Astrocyte of the cerebellum (primary cell): ENCODE measurements at regions of chr2 and their contacts with region 1.

Region 1: GRCh38 chr2:109242654-109243331 is 113.8 kb downstream of the SH3RF3 start:
- DNase-seq: peak; percentile 75
- H3K4me3 ChIP-seq: no peak overlapping the region
- CTCF ChIP-seq: no peak

Region 2: GRCh38 chr2:109135359-109136197 is 107.2 kb before region 1 on chr2:
- in situ Hi-C with region 1: loop called (anchors 5 kb)
- DNase-seq: peak; percentile 82
- H3K4me3 ChIP-seq: no peak overlapping the region
- CTCF ChIP-seq: no peak

Region 3: GRCh38 chr2:109284826-109285225 is 42.0 kb after region 1 on chr2:
- in situ Hi-C with region 1: loop called (anchors 5 kb)
- DNase-seq: peak; percentile 32
- H3K4me3 ChIP-seq: no peak overlapping the region
- CTCF ChIP-seq: no peak

Region 4: GRCh38 chr2:109304731-109305470 is 62.1 kb after region 1 on chr2:
- in situ Hi-C with region 1: no loop called
- DNase-seq: no peak
- H3K4me3 ChIP-seq: no peak overlapping the region
- CTCF ChIP-seq: no peak

Region 5: GRCh38 chr2:109348671-109349550 is 106.1 kb after region 1 on chr2:
- in situ Hi-C with region 1: loop called (anchors 5 kb)
- DNase-seq: no peak
- H3K4me3 ChIP-seq: no peak overlapping the region
- CTCF ChIP-seq: no peak